CD4-positive, alpha-beta memory T cell (primary cell): ENCODE measurements at regions of chr9 and their contacts with region 1.

Region 1: GRCh38 chr9:114505187-114506081 is at the start of gene WHRN:
- DNase-seq: peak; percentile 91 to 95 (median 93)
- H3K4me3 ChIP-seq: peak within 1 kb of the TSS; percentile 62 to 63
- H3K4me3 Mint-ChIP-seq: peak within 1 kb of the TSS; percentile 83 to 90 (median 87)
- H3K27ac ChIP-seq: peak within 1 kb of the TSS; percentile 47
- H3K27ac Mint-ChIP-seq: peak within 1 kb of the TSS; percentile 89 to 97 (median 93)
- H3K4me1 ChIP-seq: peaks cover 22% of the 10 kb centered on the region
- H3K4me1 Mint-ChIP-seq: peaks cover 10 to 45% (median 32%) of the 10 kb centered on the region in 4 donors
- H3K27me3 ChIP-seq: peaks cover 4% of the 10 kb centered on the region
- H3K27me3 Mint-ChIP-seq: peaks cover 16 to 17% of the 10 kb centered on the region in 2 donors
- total RNA-seq, gene WHRN: 8.4 to 10.1 TPM

Region 2: GRCh38 chr9:114339130-114339908 is 166.1 kb before region 1 on chr9:
- CTCF ChIA-PET with region 1: interaction called, 4 read pairs
- POLR2A ChIA-PET with region 1: no interaction called
- intact Hi-C with region 1: loop called (anchors 10 kb)
- DNase-seq: peak in 4 of 5 donors; percentile 36 to 49 (median 42)
- H3K4me3 ChIP-seq: no peak overlapping the region
- H3K4me3 Mint-ChIP-seq: no peak overlapping the region
- H3K27ac ChIP-seq: no peak overlapping the region
- H3K27ac Mint-ChIP-seq: peak overlapping the region in 6 of 7 donors; percentile 36 to 73 (median 64)
- H3K4me1 ChIP-seq: no peaks in the 10 kb centered on the region
- H3K4me1 Mint-ChIP-seq: peaks cover 8 to 30% (median 14%) of the 10 kb centered on the region in 4 donors
- H3K27me3 ChIP-seq: no peaks in the 10 kb centered on the region
- H3K27me3 Mint-ChIP-seq: no peaks in the 10 kb centered on the region

Region 3: DNA sequence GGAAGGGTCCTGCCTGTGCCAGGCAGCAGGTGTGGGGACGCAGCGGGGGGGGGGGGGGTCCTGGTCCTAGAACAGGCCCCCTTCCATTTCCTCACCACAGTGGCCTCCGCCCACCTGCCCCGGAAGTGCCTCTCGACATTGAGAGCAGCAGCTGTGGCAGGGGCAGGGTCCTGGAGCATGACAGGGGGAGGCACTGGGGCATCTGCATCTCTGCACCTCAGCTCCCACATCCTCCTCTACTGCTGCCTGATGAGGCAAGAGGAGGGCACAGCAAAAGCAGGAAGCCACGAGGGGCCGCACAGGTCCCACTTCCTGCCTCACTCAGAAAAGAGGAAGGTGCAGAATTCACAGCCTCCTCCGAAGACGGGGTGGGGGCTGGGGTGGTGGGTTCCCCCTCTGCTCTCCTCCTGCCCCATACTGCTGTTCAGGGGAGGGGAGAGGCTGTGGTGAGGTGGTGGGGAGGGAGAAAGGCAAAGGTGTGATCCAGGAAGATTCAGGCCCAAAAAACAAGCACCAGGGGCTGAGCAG is 132.4 kb before region 1 on chr9:
- CTCF ChIA-PET with region 1: interaction called, 3 read pairs
- POLR2A ChIA-PET with region 1: interaction called, 4 read pairs
- intact Hi-C with region 1: loop called (anchors 1 kb)
- DNase-seq: peak; percentile 88 to 96 (median 91)
- H3K4me3 ChIP-seq: peak overlapping the region in 1 of 2 donors; percentile 57
- H3K4me3 Mint-ChIP-seq: peak overlapping the region; percentile 84 to 96 (median 88)
- H3K27ac ChIP-seq: peak overlapping the region; percentile 79
- H3K27ac Mint-ChIP-seq: peak overlapping the region; percentile 78 to 99 (median 96)
- H3K4me1 ChIP-seq: peaks cover 96% of the 10 kb centered on the region
- H3K4me1 Mint-ChIP-seq: peaks cover 58 to 97% (median 85%) of the 10 kb centered on the region in 4 donors
- H3K27me3 ChIP-seq: no peaks in the 10 kb centered on the region
- H3K27me3 Mint-ChIP-seq: no peaks in the 10 kb centered on the region

Region 4: DNA sequence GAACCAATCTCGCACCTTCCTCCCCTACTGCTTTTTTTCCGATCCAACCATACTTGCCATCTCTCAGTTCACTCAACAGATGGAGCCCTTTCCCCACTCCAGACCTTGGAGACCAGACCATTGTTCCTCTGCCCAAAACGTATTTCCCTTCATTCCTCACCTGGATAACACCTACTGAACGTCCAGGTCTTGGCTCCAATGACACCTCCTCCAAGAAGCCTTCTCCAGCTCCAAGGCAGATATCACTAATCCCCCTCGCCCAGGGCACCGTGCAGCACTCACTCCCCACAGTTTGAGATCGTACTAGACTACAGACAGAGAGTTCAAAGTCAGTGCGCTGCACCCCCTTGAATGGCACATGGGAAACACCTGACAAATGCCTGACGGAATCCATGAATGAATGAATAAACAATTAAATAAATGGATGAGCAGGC is 70.5 kb before region 1 on chr9:
- CTCF ChIA-PET with region 1: interaction called, 25 read pairs
- POLR2A ChIA-PET with region 1: no interaction called
- intact Hi-C with region 1: loop called (anchors 1 kb)
- DNase-seq: peak in 3 of 5 donors; percentile 7 to 16 (median 15)
- H3K4me3 ChIP-seq: no peak overlapping the region
- H3K4me3 Mint-ChIP-seq: no peak overlapping the region
- H3K27ac ChIP-seq: no peak overlapping the region
- H3K27ac Mint-ChIP-seq: no peak overlapping the region
- H3K4me1 ChIP-seq: peaks cover 6% of the 10 kb centered on the region
- H3K4me1 Mint-ChIP-seq: peaks cover 0 to 4% (median 2%) of the 10 kb centered on the region in 4 donors
- H3K27me3 ChIP-seq: no peaks in the 10 kb centered on the region
- H3K27me3 Mint-ChIP-seq: no peaks in the 10 kb centered on the region

Region 5: GRCh38 chr9:114452219-114453165 is 52.9 kb before region 1 on chr9:
- CTCF ChIA-PET with region 1: no interaction called
- POLR2A ChIA-PET with region 1: interaction called, 4 read pairs
- intact Hi-C with region 1: loop called (anchors 5 kb)
- DNase-seq: peak; percentile 23 to 50 (median 24)
- H3K4me3 ChIP-seq: no peak overlapping the region
- H3K4me3 Mint-ChIP-seq: peak overlapping the region in 7 of 8 donors; percentile 28 to 80 (median 62)
- H3K27ac ChIP-seq: peak overlapping the region; percentile 16
- H3K27ac Mint-ChIP-seq: peak overlapping the region; percentile 63 to 94 (median 86)
- H3K4me1 ChIP-seq: peaks cover 27% of the 10 kb centered on the region
- H3K4me1 Mint-ChIP-seq: peaks cover 19 to 43% (median 25%) of the 10 kb centered on the region in 4 donors
- H3K27me3 ChIP-seq: no peaks in the 10 kb centered on the region
- H3K27me3 Mint-ChIP-seq: peaks cover 0 to 2% of the 10 kb centered on the region in 2 donors

Region 6: DNA sequence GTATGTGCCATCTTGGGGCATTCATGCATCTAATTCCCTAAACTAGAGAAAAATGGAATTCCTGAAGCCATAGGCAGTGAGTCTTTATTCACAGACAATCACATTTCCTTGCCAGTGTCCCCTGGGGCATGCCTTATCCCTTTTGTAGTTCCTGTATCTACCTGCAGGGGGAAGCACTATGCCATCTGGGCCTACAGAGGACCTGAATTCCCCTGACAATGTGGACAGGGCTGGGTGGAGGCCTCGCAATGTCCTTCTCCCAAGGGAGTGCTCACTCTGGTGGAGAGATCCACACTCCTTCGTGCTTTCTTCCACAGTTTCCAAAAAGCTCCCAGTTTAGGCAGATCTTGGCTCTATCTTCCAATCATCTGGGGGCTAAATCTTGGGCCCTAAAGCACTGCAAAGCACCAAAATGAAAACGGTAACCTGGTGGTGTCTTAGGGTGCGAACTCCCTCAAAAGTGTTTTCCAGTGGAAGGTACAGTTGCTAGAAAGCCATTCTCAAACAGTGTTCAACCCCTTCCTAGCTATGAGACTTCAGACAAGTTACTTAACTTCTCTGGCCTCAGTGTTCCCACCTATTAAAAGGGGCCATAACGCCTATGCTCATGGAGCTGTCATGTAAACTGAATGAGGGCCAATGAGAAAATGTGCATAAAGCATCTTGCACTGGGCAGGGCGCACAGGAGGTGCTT is 17.7 kb before region 1 on chr9:
- CTCF ChIA-PET with region 1: interaction called, 32 read pairs
- POLR2A ChIA-PET with region 1: interaction called, 15 read pairs
- intact Hi-C with region 1: loop called (anchors 1 kb)
- DNase-seq: peak; percentile 66 to 75 (median 70)
- H3K4me3 ChIP-seq: no peak overlapping the region
- H3K4me3 Mint-ChIP-seq: no peak overlapping the region
- H3K27ac ChIP-seq: no peak overlapping the region
- H3K27ac Mint-ChIP-seq: peak overlapping the region in 2 of 7 donors; percentile 24 to 55
- H3K4me1 ChIP-seq: peaks cover 14% of the 10 kb centered on the region
- H3K4me1 Mint-ChIP-seq: peaks cover 12 to 35% (median 19%) of the 10 kb centered on the region in 4 donors
- H3K27me3 ChIP-seq: no peaks in the 10 kb centered on the region
- H3K27me3 Mint-ChIP-seq: peaks cover 0 to 4% of the 10 kb centered on the region in 2 donors

Region 7: DNA sequence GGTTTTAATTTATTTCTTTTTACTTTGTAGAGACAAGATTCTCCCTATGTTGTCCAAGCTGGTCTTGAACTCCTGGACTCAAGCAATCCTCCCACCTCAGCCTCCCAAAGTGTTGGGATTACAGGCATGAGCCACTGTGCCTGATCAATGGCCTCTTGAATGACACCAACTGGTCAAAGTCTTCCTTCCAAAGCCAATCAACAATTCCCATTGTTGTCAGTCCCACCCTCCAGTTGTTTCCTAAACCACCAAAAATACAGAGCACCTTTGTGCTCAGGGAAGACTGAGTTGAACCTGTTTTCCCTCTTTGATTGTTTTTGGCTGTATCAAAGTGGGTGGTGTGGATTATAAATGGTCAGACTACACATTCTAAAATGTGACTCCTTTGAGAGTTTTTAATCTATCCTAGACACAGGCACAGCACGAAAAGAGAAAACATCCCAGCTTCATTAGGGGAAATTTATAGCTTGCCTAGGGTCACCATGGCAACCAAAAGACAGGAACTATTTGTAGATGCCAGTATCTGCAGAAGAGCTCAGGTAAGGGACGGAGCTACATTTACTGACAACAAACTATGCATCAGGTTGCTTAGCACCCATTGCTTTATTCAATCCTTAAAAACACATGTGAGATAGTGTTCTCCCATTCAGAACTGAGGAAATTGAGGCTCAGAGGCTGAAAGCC is 54.5 kb after region 1 on chr9:
- CTCF ChIA-PET with region 1: no interaction called
- POLR2A ChIA-PET with region 1: no interaction called
- intact Hi-C with region 1: no loop called
- DNase-seq: no peak
- H3K4me3 ChIP-seq: no peak overlapping the region
- H3K4me3 Mint-ChIP-seq: no peak overlapping the region
- H3K27ac ChIP-seq: no peak overlapping the region
- H3K27ac Mint-ChIP-seq: no peak overlapping the region
- H3K4me1 ChIP-seq: no peaks in the 10 kb centered on the region
- H3K4me1 Mint-ChIP-seq: no peaks in the 10 kb centered on the region
- H3K27me3 ChIP-seq: no peaks in the 10 kb centered on the region
- H3K27me3 Mint-ChIP-seq: peaks cover 6 to 13% of the 10 kb centered on the region in 2 donors